ENCODE measurements at regions of chr14 and their contacts with region 1.

Region 1: GRCh38 chr14:95442633-95443021 is 73.8 kb downstream of the SYNE3 start:
- DNase-seq: peak; percentile 46 to 79 (median 58)
- H3K4me3 ChIP-seq: no peak overlapping the region
- H3K4me3 Mint-ChIP-seq: no peak overlapping the region
- H3K27ac ChIP-seq: no peak overlapping the region
- H3K27ac Mint-ChIP-seq: peak overlapping the region in 4 of 8 donors; percentile 17 to 85 (median 64)
- H3K4me1 ChIP-seq: peaks cover 5% of the 10 kb centered on the region
- H3K4me1 Mint-ChIP-seq: peaks cover 3 to 5% (median 4%) of the 10 kb centered on the region in 3 donors
- H3K27me3 ChIP-seq: no peaks in the 10 kb centered on the region
- H3K27me3 Mint-ChIP-seq: peaks cover 0 to 2% of the 10 kb centered on the region in 2 donors

Region 2: DNA sequence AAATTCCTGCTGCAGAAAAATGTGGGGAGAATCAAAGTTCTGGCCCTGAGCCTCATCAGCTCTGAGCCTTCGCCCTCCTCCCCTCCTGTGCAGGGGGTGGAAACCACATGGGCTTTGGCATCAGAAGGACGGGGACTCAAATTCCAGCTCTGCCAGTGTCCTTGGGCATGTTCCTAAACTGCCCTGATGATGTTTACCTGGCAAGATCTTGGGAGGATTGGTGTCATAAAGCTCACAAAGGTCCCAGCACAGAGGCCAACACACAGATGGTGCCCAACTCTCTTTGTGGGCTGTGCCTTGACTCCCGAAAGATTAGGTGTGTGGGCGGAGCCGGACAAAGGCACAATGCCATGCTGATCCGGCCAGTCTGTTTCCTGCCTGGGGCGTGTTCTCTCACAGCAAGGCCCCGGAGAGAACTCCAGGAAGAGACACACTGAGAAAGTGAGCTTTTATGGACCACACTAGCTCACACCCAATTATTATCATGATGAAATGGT is 102.4 kb before region 1 on chr14:
- CTCF ChIA-PET with region 1: no interaction called
- POLR2A ChIA-PET with region 1: no interaction called
- DNase-seq: no peak
- H3K4me3 ChIP-seq: no peak overlapping the region
- H3K4me3 Mint-ChIP-seq: no peak overlapping the region
- H3K27ac ChIP-seq: no peak overlapping the region
- H3K27ac Mint-ChIP-seq: no peak overlapping the region
- H3K4me1 ChIP-seq: no peaks in the 10 kb centered on the region
- H3K4me1 Mint-ChIP-seq: no peaks in the 10 kb centered on the region
- H3K27me3 ChIP-seq: no peaks in the 10 kb centered on the region
- H3K27me3 Mint-ChIP-seq: peaks cover 19 to 52% of the 10 kb centered on the region in 2 donors

Region 3: GRCh38 chr14:95460647-95461478 is 18.2 kb after region 1 on chr14:
- CTCF ChIA-PET with region 1: interaction called, 11 read pairs
- POLR2A ChIA-PET with region 1: no interaction called
- DNase-seq: no peak
- H3K4me3 ChIP-seq: no peak overlapping the region
- H3K4me3 Mint-ChIP-seq: no peak overlapping the region
- H3K27ac ChIP-seq: no peak overlapping the region
- H3K27ac Mint-ChIP-seq: peak overlapping the region in 7 of 8 donors; percentile 54 to 98 (median 94)
- H3K4me1 ChIP-seq: peaks cover 57% of the 10 kb centered on the region
- H3K4me1 Mint-ChIP-seq: peaks cover 42 to 57% (median 44%) of the 10 kb centered on the region in 3 donors
- H3K27me3 ChIP-seq: no peaks in the 10 kb centered on the region
- H3K27me3 Mint-ChIP-seq: no peaks in the 10 kb centered on the region

Region 4: DNA sequence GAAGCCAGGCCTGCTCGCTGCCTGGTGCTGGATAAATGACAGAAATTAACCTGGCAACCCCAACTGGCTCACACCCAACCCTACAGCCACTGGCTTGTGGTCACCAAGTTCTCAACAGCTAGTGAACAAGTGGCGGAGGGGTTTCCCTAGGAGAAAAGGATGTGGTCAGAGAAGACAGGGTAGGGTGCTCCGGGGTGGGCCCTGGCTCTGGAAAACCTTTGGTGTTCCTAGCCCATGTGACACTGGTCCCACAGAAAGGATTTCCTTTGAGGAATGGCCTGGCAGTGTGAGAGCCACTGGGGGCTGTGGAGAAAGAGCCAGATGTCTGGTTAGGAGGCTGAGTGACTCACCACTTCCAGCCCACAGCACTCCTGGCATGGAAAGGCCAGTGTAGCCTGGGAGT is 65.1 kb after region 1 on chr14:
- CTCF ChIA-PET with region 1: interaction called, 11 read pairs
- POLR2A ChIA-PET with region 1: no interaction called
- DNase-seq: peak in 1 of 5 donors; percentile 19
- H3K4me3 ChIP-seq: no peak overlapping the region
- H3K4me3 Mint-ChIP-seq: peak overlapping the region in 4 of 7 donors; percentile 13 to 48 (median 27)
- H3K27ac ChIP-seq: no peak overlapping the region
- H3K27ac Mint-ChIP-seq: peak overlapping the region; percentile 32 to 96 (median 74)
- H3K4me1 ChIP-seq: peaks cover 65% of the 10 kb centered on the region
- H3K4me1 Mint-ChIP-seq: peaks cover 64 to 88% (median 77%) of the 10 kb centered on the region in 3 donors
- H3K27me3 ChIP-seq: no peaks in the 10 kb centered on the region
- H3K27me3 Mint-ChIP-seq: no peaks in the 10 kb centered on the region

Region 5: GRCh38 chr14:95534299-95535225 is 91.9 kb after region 1 on chr14 and contains the start of gene GLRX5:
- CTCF ChIA-PET with region 1: interaction called, 110 read pairs
- POLR2A ChIA-PET with region 1: no interaction called
- DNase-seq: peak; percentile 94 to 99 (median 99)
- H3K4me3 ChIP-seq: peak within 1 kb of the TSS; percentile 69
- H3K4me3 Mint-ChIP-seq: peak within 1 kb of the TSS; percentile 89 to 98 (median 92)
- H3K27ac ChIP-seq: peak within 1 kb of the TSS; percentile 84
- H3K27ac Mint-ChIP-seq: peak within 1 kb of the TSS; percentile 84 to 98 (median 96)
- H3K4me1 ChIP-seq: peaks cover 38% of the 10 kb centered on the region
- H3K4me1 Mint-ChIP-seq: peaks cover 62 to 83% (median 78%) of the 10 kb centered on the region in 3 donors
- H3K27me3 ChIP-seq: no peaks in the 10 kb centered on the region
- H3K27me3 Mint-ChIP-seq: peaks cover 0 to 4% of the 10 kb centered on the region in 2 donors
- total RNA-seq, gene GLRX5: 52.9 to 54.6 TPM